ENCODE measurements at regions of chr20 and their contacts with region 1.

Region 1: DNA sequence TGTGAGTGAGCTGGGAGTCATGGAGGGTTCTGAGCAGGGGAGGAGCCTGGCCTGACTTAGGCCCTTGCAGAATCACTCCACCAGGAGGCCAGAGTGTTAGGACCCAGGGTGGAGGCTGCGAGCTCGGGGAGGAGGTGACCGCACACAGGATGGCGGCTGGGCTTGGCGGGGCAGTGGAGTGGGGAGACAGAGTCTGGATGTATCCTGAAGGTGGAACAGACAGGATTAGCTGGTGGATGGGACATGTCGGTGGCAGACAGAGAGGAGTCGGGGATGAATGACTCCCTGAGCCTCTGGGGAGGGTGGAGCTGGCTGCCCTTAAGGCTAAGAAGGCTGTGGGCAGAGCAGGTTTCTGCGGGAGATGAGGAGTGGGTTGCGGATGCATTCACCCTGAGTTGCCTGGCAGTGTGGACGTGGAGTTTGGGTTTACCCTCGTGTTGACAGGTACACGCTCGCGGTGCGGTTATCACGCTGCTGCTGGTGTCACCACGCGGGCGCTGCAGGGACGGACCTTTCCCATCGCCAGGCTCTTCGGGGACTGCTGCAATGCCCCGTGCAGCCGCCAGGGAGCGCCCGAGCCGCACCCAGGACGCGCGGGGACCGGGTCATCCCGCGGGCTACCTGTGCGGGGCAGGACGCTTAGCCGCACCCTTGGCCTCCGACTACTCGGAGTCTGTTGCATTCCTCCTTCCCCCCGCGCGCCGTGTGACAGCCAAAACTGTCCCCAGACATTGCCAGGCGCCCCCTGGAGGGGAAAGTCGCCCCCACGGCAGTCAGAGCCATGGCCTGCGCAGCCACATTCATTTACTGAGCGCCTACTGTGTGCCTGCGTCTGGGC is 43.0 kb upstream of the PTGIS start:
- DNase-seq: no peak
- H3K4me3 ChIP-seq: peak overlapping the region; percentile 46
- CTCF ChIP-seq: peak; percentile 95

Region 2: DNA sequence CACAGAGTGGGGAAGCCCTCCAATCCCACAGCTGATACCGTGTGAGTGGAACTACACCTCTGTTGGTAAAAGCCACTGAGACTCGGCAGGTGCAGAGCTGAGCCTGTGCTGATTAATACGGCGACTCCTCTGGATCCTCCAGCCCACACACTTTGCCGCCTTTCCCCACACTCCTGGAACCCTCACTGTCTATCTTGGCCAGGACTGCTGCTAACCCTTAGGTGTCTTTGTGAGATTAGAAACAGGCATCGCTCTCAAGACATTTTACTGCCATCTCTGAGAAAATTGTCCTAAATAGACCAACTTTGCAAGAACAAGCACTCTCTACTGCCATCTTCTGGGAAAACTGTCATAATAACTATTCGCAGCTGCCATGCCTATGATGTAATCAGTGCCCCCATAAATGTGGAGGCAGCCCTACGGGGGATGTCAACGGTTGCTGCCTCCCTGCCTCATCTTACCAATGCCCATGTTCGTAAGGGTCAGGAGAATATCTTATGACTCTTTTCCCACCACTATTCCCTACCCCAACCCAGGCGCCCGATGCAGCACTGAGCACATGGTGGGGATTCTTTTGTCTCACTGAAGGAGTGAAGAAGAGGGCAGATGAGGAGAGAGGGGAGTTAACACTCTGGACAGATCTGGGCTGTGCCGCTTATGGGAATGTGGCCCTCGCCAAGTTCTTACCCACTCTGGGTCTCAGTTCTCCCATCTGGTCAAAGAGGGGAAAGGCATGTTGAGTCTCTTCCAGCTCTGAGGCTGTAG is 102.3 kb before region 1 on chr20:
- CTCF ChIA-PET with region 1: interaction called, 18 read pairs
- POLR2A ChIA-PET with region 1: no interaction called
- DNase-seq: no peak
- H3K4me3 ChIP-seq: no peak overlapping the region
- CTCF ChIP-seq: peak; percentile 55

Region 3: GRCh38 chr20:49549811-49550551 is 60.9 kb before region 1 on chr20:
- CTCF ChIA-PET with region 1: interaction called, 626 read pairs
- POLR2A ChIA-PET with region 1: no interaction called
- DNase-seq: no peak
- H3K4me3 ChIP-seq: no peak overlapping the region
- CTCF ChIP-seq: no peak

Region 4: DNA sequence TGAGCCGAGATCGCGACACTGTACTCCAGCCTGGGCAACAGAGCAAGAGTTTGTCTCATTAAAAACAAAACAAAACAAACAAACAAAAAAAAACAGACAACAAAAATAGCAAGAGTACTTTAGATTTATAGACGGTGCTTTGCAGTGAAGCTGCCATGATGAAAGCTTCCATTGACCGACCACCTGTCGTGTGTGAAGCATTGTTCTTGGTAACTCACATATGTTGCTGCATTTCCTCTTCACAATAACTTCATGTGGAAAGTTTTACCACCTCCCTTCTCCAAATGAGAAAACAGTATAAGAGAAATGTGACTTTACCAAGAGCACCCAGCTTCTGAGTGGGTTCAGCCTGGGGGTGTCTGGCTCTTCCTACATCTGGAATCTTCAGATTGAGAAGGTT is 13.4 kb after region 1 on chr20:
- CTCF ChIA-PET with region 1: interaction called, 15 read pairs
- POLR2A ChIA-PET with region 1: no interaction called
- DNase-seq: no peak
- H3K4me3 ChIP-seq: no peak overlapping the region
- CTCF ChIP-seq: no peak

Region 5: DNA sequence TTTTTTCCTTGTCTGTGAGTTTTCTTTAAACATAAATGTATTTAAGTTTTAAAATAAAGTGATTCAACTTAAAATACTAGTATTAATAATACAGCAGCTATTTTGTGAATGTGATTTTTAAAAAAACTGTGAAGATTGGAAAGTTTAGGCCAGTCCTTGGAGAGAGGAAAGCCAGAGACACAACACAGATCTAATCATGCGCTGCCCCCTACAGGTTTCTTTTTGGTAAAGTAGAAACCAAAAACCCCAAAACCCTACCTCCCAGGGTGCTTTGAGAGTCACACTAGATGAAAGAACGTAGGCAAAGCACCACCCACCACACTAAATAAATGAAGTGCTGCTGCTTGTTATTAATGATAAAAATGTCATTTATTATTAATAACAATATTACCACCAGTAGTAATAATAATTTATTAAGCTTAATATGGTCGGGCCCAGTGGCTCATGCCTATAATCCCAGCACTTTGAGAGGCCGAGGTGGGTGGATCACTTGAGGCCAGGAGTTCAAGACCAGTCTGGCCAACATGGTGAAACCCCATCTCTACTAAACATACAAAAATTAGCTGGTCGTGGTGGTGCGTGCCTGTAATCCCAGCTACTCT is 235.4 kb after region 1 on chr20:
- CTCF ChIA-PET with region 1: interaction called, 293 read pairs
- POLR2A ChIA-PET with region 1: no interaction called
- DNase-seq: no peak
- H3K4me3 ChIP-seq: no peak overlapping the region
- CTCF ChIP-seq: peak; percentile 30

Region 6: GRCh38 chr20:49888345-49888966 is 277.5 kb after region 1 on chr20:
- CTCF ChIA-PET with region 1: interaction called, 34 read pairs
- POLR2A ChIA-PET with region 1: no interaction called
- DNase-seq: no peak
- H3K4me3 ChIP-seq: no peak overlapping the region
- CTCF ChIP-seq: peak; percentile 80